Heart right ventricle (tissue), 16 donors: ENCODE measurements at regions of chr2 and their contacts with region 1.

Region 1: GRCh38 chr2:96913398-96914202 is 43.7 kb upstream of the SEMA4C start:
- DNase-seq: peak in 1 of 2 donors; percentile 57
- ATAC-seq: peak; percentile 19 to 68 (median 35)
- H3K4me3 ChIP-seq: peak overlapping the region in 2 of 10 donors; percentile 1 to 19
- H3K27ac ChIP-seq: peak overlapping the region in 9 of 10 donors; percentile 49 to 78 (median 69)
- H3K4me1 ChIP-seq: peaks cover 13 to 77% (median 49%) of the 10 kb centered on the region in 9 donors
- H3K27me3 ChIP-seq: no peaks in the 10 kb centered on the region
- CTCF ChIP-seq: no peak

Region 2: DNA sequence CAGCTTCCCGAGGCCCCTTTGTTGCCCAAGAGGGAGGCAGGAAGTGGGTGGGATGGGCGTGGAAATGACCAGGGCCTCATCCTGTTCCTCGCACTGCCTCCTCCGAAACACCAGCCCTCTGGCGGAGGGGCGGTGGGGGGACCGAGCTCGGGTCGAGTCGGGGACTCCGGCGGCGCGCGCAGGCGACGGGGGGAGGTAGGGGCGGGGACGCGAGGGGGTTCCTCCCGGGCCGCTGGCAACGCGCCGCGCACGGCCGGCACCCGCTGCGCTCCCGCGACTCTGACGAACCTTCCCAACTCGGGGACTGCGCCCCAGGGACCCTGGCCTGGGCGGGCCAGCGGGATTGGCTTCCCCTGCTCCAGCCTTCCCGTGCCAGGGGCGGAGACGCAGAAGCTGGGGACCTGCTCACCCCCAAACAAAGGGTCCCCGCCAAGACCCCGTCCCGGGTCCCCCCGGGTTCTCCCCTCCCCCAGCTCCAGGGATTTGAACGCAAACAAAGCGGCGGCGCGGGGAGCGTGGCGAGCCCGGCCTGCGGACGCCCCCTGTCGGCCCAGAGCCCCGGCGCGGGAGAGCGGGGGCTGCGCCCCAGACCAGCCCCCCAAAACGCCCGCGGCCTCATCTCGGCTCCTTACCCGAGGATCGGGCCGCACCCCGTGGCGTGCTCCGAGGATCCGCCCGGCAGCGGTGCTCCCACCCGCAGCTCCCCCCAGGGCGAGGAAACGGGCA is 44.9 kb before region 1 on chr2:
- intact Hi-C with region 1: loop called in 6 of 10 experiments (anchors 2 to 5 kb)
- DNase-seq: peak; percentile 90 to 93
- ATAC-seq: peak; percentile 70 to 80 (median 75)
- H3K4me3 ChIP-seq: peak overlapping the region; percentile 72 to 100 (median 98)
- H3K27ac ChIP-seq: peak overlapping the region; percentile 87 to 100 (median 100)
- H3K4me1 ChIP-seq: peaks cover 16 to 82% (median 72%) of the 10 kb centered on the region in 9 donors
- H3K27me3 ChIP-seq: peaks cover 0 to 56% (median 0%) of the 10 kb centered on the region in 7 donors
- CTCF ChIP-seq: peak; percentile 44 to 77 (median 69)

Region 3: GRCh38 chr2:96874118-96874831 is 39.3 kb before region 1 on chr2:
- intact Hi-C with region 1: loop called in 5 of 10 experiments (anchors 2 to 5 kb)
- DNase-seq: no peak
- ATAC-seq: peak in 3 of 8 donors; percentile 5 to 9 (median 7)
- H3K4me3 ChIP-seq: peak overlapping the region in 2 of 10 donors; percentile 1 to 28
- H3K27ac ChIP-seq: peak overlapping the region; percentile 38 to 100 (median 81)
- H3K4me1 ChIP-seq: peaks cover 0 to 65% (median 52%) of the 10 kb centered on the region in 9 donors
- H3K27me3 ChIP-seq: peaks cover 0 to 39% (median 0%) of the 10 kb centered on the region in 7 donors
- CTCF ChIP-seq: no peak

Region 4: GRCh38 chr2:96945012-96945804 is 31.6 kb after region 1 on chr2:
- intact Hi-C with region 1: loop called in 6 of 10 experiments (anchors 5 kb)
- DNase-seq: no peak
- ATAC-seq: no peak
- H3K4me3 ChIP-seq: no peak overlapping the region
- H3K27ac ChIP-seq: no peak overlapping the region
- H3K4me1 ChIP-seq: peaks cover 0 to 8% (median under 1%) of the 10 kb centered on the region in 9 donors
- H3K27me3 ChIP-seq: no peaks in the 10 kb centered on the region
- CTCF ChIP-seq: no peak

Region 5: DNA sequence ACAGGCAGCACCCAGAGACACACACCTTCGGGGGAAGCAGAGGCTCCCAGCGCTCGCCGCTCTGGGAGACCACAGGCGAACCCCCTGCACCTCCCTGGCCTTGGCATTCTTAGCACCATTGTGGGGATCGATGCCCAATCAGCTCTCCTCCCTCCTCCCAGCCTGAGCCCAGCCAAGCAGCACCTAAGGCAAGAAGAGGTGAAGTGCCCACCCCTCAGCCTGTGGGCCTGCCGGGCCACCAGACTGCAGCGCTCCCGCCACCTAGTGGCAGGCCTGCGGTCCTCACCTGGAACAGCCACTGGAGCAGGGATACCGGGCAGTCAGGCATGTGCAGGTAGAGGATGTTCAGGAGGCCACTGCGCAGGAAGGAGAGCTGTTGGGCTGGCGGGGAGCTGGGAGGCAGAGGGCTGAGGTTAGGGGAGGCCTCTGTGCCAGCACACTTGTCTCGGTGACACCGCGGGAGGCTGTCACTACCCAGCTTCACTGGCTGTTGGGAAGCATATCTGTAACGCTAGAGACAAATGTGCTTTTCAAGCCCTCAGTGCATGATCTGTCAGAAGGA is 37.6 kb after region 1 on chr2:
- intact Hi-C with region 1: loop called in 7 of 10 experiments (anchors 1 to 5 kb)
- DNase-seq: peak; percentile 69 to 78
- ATAC-seq: peak; percentile 81 to 93 (median 87)
- H3K4me3 ChIP-seq: peak overlapping the region in 1 of 10 donors; percentile 6
- H3K27ac ChIP-seq: no peak overlapping the region
- H3K4me1 ChIP-seq: peaks cover 13 to 47% (median 39%) of the 10 kb centered on the region in 9 donors
- H3K27me3 ChIP-seq: peaks cover 0 to 9% (median 0%) of the 10 kb centered on the region in 7 donors
- CTCF ChIP-seq: peak; percentile 90 to 98 (median 93)